A673 (cell line): ENCODE measurements at regions of chr11 and their contacts with region 1.

Region 1: GRCh38 chr11:41461057-41461681 is 1.7 kb upstream of the LRRC4C start:
- DNase-seq: peak; percentile 40
- H3K4me3 ChIP-seq: no peak overlapping the region
- H3K27ac ChIP-seq: no peak overlapping the region
- H3K4me1 ChIP-seq: no peaks in the 10 kb centered on the region
- H3K27me3 ChIP-seq: peaks cover 39% of the 10 kb centered on the region
- CTCF ChIP-seq: peak; percentile 97

Region 2: DNA sequence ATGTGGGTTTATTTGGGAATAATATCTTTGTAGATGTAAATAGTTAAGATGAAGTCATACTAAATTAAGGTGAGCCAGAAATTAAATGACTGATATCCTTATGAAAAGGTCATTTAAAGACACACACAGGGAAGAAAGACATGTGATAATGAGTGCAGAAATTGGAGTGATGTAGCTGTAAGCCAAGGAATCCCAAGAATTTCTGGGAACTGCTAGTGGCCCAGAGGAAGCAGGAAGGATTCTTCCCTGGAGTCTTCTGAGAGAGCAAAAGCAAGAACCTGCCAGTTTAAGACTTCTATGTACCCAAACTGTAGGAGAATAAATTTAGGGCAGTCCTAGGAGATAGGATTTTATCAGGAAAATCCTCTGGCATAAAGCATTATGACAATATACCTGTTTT is 68.6 kb before region 1 on chr11:
- CTCF ChIA-PET with region 1: no interaction called
- POLR2A ChIA-PET with region 1: no interaction called
- intact Hi-C with region 1: no loop called
- DNase-seq: no peak
- H3K4me3 ChIP-seq: no peak overlapping the region
- H3K27ac ChIP-seq: no peak overlapping the region
- H3K4me1 ChIP-seq: no peaks in the 10 kb centered on the region
- H3K27me3 ChIP-seq: no peaks in the 10 kb centered on the region
- CTCF ChIP-seq: no peak

Region 3: GRCh38 chr11:41612415-41612814 is 151.2 kb after region 1 on chr11:
- CTCF ChIA-PET with region 1: no interaction called
- POLR2A ChIA-PET with region 1: no interaction called
- intact Hi-C with region 1: loop called (anchors 5 kb)
- DNase-seq: peak; percentile 13
- H3K4me3 ChIP-seq: no peak overlapping the region
- H3K27ac ChIP-seq: no peak overlapping the region
- H3K4me1 ChIP-seq: no peaks in the 10 kb centered on the region
- H3K27me3 ChIP-seq: no peaks in the 10 kb centered on the region
- CTCF ChIP-seq: peak; percentile 42